MCF 10A (cell line): ENCODE measurements at regions of chr14 and their contacts with region 1.

Region 1: GRCh38 chr14:34699873-34700621 is 14.3 kb downstream of the CFL2 start:
- DNase-seq: peak; percentile 80
- H3K4me3 Mint-ChIP-seq: peak overlapping the region; percentile 37
- H3K27ac Mint-ChIP-seq: peak overlapping the region; percentile 77
- H3K4me1 Mint-ChIP-seq: peaks cover 15% of the 10 kb centered on the region
- H3K27me3 Mint-ChIP-seq: no peaks in the 10 kb centered on the region
- CTCF ChIP-seq: no peak

Region 2: DNA sequence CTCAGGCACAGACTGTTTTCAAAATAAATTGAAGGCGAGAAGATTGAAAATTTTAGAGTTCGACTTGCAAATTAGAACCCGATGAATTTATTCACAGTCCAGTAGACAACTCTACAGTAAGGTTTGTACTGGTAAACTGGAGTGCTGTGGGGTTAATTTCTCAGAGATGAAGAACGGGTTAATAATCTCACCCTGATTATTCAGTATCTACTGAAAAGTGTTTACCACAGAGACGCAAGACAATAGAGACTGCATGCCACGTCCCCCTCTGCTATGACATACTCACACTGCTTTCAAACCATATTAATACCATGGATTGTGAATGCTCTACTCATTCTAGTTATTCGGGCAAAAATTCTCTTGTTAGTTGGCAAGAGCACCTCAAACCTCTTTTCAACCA is 21.7 kb before region 1 on chr14:
- CTCF ChIA-PET with region 1: interaction called, 7 read pairs
- POLR2A ChIA-PET with region 1: interaction called, 15 read pairs
- intact Hi-C with region 1: no loop called
- DNase-seq: no peak
- H3K4me3 Mint-ChIP-seq: peak overlapping the region; percentile 7
- H3K27ac Mint-ChIP-seq: peak overlapping the region; percentile 56
- H3K4me1 Mint-ChIP-seq: peaks cover 10% of the 10 kb centered on the region
- H3K27me3 Mint-ChIP-seq: no peaks in the 10 kb centered on the region
- CTCF ChIP-seq: no peak